ENCODE measurements at regions of chr4 and their contacts with region 1.

Region 1: DNA sequence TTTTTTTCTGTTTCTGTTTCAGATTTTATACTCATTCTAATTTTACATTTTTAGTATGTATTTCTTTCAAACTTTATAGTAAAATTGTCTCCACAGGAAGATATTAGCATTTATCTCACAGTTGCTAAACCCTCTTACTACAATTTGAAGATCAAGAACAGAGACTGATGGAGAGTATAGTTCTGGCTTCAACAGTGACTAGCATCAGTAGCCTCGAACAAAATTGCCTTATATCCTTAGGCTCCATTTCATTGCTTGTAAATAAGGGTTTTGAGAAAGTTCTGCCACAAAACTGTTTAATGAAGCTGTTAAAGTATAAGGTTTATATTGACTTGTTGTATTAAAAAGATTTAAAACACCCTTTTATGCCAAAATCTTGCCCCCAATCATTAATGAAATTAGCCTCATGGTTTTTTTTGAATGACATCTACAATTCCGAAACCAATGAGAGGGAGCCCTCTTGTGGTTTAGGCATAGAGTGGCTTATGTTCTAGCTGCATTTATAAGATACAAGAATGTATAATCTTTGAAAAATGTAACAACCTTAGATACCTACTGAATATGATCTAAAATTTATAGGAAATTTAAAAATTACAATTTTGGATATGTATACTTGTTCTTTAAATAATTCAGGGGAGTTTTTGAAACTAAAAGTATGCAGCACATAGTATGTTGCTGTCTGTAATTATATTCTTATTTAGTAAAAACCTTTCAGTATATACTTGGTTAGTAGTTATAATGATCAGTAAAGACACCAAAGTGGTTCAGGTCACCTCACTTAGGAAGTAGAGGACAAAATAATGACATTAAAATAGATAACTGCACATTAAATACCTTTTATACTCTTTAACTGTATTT is 109.8 kb upstream of the HPGD start:
- DNase-seq: no peak
- H3K4me3 ChIP-seq: no peak overlapping the region
- CTCF ChIP-seq: peak in 1 of 3 donors; percentile 31
- POLR2A ChIP-seq: no peak

Region 2: DNA sequence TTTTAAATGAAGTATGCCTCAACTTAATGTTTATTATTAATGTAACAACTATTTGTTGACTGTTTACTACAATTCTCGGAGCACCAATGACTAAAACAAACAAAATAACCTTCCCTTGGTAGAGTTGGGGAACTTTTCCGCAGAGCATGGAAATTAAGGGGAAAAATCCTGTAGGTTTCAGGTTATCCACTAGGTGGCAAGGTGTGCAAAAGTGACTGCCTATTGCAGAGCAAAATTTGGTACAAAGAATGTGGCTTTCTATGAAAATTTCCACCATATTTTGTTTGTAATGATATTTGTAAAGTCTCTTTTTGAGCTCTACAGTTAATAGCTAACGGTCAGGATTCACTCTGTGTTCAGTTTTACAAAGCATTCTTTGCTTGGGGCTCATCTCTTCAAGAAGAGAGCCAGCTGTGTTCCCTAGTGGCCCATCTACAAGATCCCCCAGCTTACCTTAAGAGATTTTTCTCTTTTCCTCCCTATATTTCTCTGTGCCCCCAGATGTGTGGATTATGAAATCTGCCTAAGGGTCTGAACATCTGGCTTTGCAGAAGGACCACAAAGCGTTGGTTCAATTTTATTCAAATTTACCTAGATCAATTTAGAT is 409.8 kb before region 1 on chr4:
- intact Hi-C with region 1: loop called (anchors 5 kb)
- DNase-seq: no peak
- H3K4me3 ChIP-seq: no peak overlapping the region
- CTCF ChIP-seq: no peak
- POLR2A ChIP-seq: no peak

Region 3: GRCh38 chr4:174437324-174437723 is 194.8 kb before region 1 on chr4:
- intact Hi-C with region 1: no loop called
- DNase-seq: no peak
- H3K4me3 ChIP-seq: no peak overlapping the region
- CTCF ChIP-seq: no peak
- POLR2A ChIP-seq: no peak

Region 4: DNA sequence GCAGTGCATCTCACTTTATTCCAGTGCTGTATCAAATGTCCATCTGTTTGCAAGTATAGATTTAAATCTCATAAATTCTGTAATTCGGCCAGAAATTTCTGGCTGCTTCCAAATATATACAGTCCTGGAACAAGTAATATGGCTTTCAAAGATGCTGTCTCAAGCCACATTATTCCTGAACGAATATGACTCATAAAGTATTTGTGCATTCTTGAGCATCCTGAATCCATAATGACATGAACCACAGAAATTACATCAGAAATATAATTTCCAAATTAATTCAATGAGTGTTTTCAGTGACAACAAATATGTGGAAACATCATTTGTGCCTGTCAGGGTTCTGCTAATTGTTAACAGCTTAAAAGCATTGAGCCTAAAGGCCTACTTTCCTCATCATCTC is 31.1 kb after region 1 on chr4:
- intact Hi-C with region 1: no loop called
- DNase-seq: no peak
- H3K4me3 ChIP-seq: no peak overlapping the region
- CTCF ChIP-seq: no peak
- POLR2A ChIP-seq: no peak